Common myeloid progenitor, CD34-positive (primary cell): ENCODE measurements at regions of chr19 and their contacts with region 1.

Region 1: DNA sequence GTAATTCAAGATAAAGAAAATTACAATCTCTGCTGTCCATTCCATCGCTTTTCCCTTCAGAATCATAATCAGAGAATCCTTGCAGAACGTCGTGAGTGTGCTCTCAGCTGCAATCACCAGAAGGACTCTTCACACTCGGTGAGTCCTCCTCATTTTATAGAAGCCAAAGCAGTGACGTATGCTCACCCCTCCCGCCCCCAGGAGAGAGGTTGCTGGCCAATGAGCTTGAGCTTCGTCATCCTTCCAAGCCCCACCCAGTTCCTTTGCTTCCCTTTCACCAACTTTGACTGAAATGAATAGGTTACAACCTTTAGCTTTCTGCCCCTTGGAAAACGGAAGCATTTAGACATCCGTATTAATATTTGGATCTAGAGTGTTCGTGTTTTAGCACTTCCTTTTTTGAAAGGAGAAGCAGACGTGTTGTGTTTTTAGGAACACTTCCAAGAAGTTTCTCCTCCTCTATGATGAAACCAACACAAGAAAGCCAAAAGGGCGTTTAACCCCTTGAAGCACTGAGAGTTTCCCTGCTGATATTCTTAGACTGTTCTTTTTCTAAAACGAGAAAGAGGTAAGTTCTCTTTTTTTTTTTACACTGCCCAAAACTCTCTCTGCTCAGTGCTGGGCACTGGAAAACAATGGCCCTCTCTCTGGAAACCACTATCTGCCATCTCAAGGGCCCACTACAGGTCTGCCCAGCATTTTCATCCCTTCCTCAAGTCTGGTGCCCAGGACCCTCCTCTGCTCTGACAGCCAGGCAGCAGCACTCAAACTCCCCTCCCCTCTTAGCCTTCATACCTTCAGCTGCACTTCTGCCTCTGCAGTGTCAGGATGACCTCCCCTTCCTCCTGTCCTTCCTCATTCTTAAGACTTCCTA is 44.3 kb upstream of the CEACAM21 start:
- DNase-seq: peak; percentile 97 to 98 (median 98)
- H3K4me3 ChIP-seq: peak overlapping the region in 6 of 7 experiments; percentile 39 to 69 (median 60)
- H3K27ac ChIP-seq: peak overlapping the region in 1 of 2 experiments; percentile 79
- H3K4me1 ChIP-seq: peaks cover 45 to 77% (median 64%) of the 10 kb centered on the region in 4 experiments
- H3K27me3 ChIP-seq: no peaks in the 10 kb centered on the region

Region 2: DNA sequence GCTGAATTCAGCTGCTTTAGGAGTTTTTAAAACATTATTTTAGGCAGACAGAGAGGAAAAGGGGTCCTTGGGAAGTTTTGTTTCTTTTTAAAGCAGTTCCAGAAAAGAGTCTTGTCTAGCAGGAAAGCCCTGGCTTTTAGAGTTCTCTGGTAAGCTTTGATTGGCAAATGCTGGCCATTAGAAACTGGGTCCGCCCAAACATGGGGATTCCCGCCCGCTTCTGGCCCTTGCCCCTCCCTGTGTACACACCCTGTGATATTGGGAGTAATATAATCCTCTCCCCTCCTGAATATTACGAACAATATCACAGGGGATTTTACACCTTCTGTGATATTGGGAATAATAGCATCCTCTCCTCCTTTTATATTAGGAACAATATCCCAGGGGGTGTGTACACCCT is 29.8 kb before region 1 on chr19:
- CTCF ChIA-PET with region 1: no interaction called
- POLR2A ChIA-PET with region 1: no interaction called
- DNase-seq: no peak
- H3K4me3 ChIP-seq: no peak overlapping the region
- H3K27ac ChIP-seq: no peak overlapping the region
- H3K4me1 ChIP-seq: peaks cover 0 to 4% (median 1%) of the 10 kb centered on the region in 4 experiments
- H3K27me3 ChIP-seq: peaks cover 2 to 18% (median 10%) of the 10 kb centered on the region in 5 experiments

Region 3: GRCh38 chr19:41548954-41549688 is 17.4 kb after region 1 on chr19:
- CTCF ChIA-PET with region 1: interaction called, 11 read pairs
- POLR2A ChIA-PET with region 1: interaction called, 7 read pairs
- DNase-seq: peak; percentile 86 to 99 (median 97)
- H3K4me3 ChIP-seq: peak overlapping the region in 6 of 7 experiments; percentile 67 to 91 (median 76)
- H3K27ac ChIP-seq: peak overlapping the region; percentile 68 to 82
- H3K4me1 ChIP-seq: peaks cover 49 to 88% (median 77%) of the 10 kb centered on the region in 4 experiments
- H3K27me3 ChIP-seq: no peaks in the 10 kb centered on the region

Region 4: GRCh38 chr19:41641879-41642485 is 110.3 kb after region 1 on chr19:
- CTCF ChIA-PET with region 1: no interaction called
- POLR2A ChIA-PET with region 1: no interaction called
- DNase-seq: peak; percentile 67 to 80 (median 69)
- H3K4me3 ChIP-seq: no peak overlapping the region
- H3K27ac ChIP-seq: no peak overlapping the region
- H3K4me1 ChIP-seq: peaks cover 6 to 26% (median 18%) of the 10 kb centered on the region in 4 experiments
- H3K27me3 ChIP-seq: no peaks in the 10 kb centered on the region